ENCODE measurements at regions of chr19 and their contacts with region 1.

Region 1: GRCh38 chr19:18192673-18193387 is at the start of gene MPV17L2:
- DNase-seq: peak; percentile 100
- ATAC-seq: peak; percentile 95
- H3K4me3 Mint-ChIP-seq: peak within 1 kb of the TSS; percentile 90
- H3K27ac Mint-ChIP-seq: peak within 1 kb of the TSS; percentile 93
- H3K4me1 Mint-ChIP-seq: peaks cover 26% of the 10 kb centered on the region
- H3K27me3 Mint-ChIP-seq: no peaks in the 10 kb centered on the region
- total RNA-seq, gene MPV17L2: 9.2 to 10.9 TPM

Region 2: DNA sequence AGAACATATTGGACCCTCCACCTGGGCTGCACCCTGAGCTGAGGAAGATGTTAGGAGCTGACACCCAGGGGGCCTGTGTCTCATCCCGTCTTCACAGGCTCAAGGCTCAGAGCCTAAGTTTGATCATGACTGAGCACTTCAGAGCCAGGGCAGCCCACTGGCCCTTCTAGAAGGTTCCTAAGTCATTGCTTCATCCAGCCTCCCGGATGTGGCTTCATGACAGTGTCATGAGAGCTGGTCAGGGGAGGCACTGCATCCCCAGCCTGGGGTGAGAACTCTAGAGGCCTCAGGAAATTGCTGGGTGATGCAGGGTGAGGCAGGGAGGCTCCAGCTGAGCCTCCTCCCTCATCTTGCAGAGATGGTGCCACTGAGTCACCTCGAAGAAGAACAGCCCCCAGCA is 64.8 kb before region 1 on chr19:
- CTCF ChIA-PET with region 1: no interaction called
- POLR2A ChIA-PET with region 1: no interaction called
- DNase-seq: peak; percentile 46
- ATAC-seq: peak; percentile 47
- H3K4me3 Mint-ChIP-seq: no peak overlapping the region
- H3K27ac Mint-ChIP-seq: peak overlapping the region; percentile 81
- H3K4me1 Mint-ChIP-seq: peaks cover 12% of the 10 kb centered on the region
- H3K27me3 Mint-ChIP-seq: no peaks in the 10 kb centered on the region

Region 3: GRCh38 chr19:18173572-18174288 is 19.1 kb before region 1 on chr19 and contains the start of gene IFI30:
- CTCF ChIA-PET with region 1: interaction called, 10 read pairs
- POLR2A ChIA-PET with region 1: interaction called, 3 read pairs
- DNase-seq: peak; percentile 72
- ATAC-seq: peak; percentile 83
- H3K4me3 Mint-ChIP-seq: peak within 1 kb of the TSS; percentile 89
- H3K27ac Mint-ChIP-seq: peak within 1 kb of the TSS; percentile 86
- H3K4me1 Mint-ChIP-seq: peaks cover 29% of the 10 kb centered on the region
- H3K27me3 Mint-ChIP-seq: no peaks in the 10 kb centered on the region
- total RNA-seq, gene IFI30: 67.4 to 72.3 TPM

Region 4: GRCh38 chr19:18179957-18180356 is 12.9 kb before region 1 on chr19:
- CTCF ChIA-PET with region 1: interaction called, 11 read pairs
- POLR2A ChIA-PET with region 1: interaction called, 5 read pairs
- DNase-seq: no peak
- ATAC-seq: no peak
- H3K4me3 Mint-ChIP-seq: no peak overlapping the region
- H3K27ac Mint-ChIP-seq: no peak overlapping the region
- H3K4me1 Mint-ChIP-seq: peaks cover 7% of the 10 kb centered on the region
- H3K27me3 Mint-ChIP-seq: no peaks in the 10 kb centered on the region

Region 5: GRCh38 chr19:18203863-18204393 is 11.1 kb after region 1 on chr19 and contains the start of gene RAB3A:
- CTCF ChIA-PET with region 1: interaction called, 49 read pairs
- POLR2A ChIA-PET with region 1: interaction called, 7 read pairs
- DNase-seq: peak; percentile 100
- ATAC-seq: peak; percentile 95
- H3K4me3 Mint-ChIP-seq: peak within 1 kb of the TSS; percentile 95
- H3K27ac Mint-ChIP-seq: peak within 1 kb of the TSS; percentile 91
- H3K4me1 Mint-ChIP-seq: peaks cover 28% of the 10 kb centered on the region
- H3K27me3 Mint-ChIP-seq: peaks cover 3% of the 10 kb centered on the region
- total RNA-seq, gene RAB3A: 5.6 to 6.2 TPM